Heart left ventricle (tissue), 16 donors: ENCODE measurements at regions of chr5 and their contacts with region 1.

Region 1: GRCh38 chr5:78537821-78538220 is 110.8 kb downstream of the LHFPL2 start:
- DNase-seq: no peak
- ATAC-seq: peak; percentile 57 to 81 (median 68)
- H3K4me3 ChIP-seq: no peak overlapping the region
- H3K27ac ChIP-seq: peak overlapping the region in 1 of 12 donors; percentile 6
- H3K4me1 ChIP-seq: peaks cover 0 to 72% (median 20%) of the 10 kb centered on the region in 12 donors
- H3K27me3 ChIP-seq: no peaks in the 10 kb centered on the region
- CTCF ChIP-seq: peak in 11 of 12 donors; percentile 30 to 71 (median 62)
- POLR2A ChIP-seq: no peak

Region 2: GRCh38 chr5:78638423-78638822 is 100.6 kb after region 1 on chr5:
- intact Hi-C with region 1: loop called in 3 of 10 experiments (anchors 5 to 10 kb)
- DNase-seq: peak; percentile 65 to 87 (median 71)
- ATAC-seq: peak; percentile 82 to 93 (median 92)
- H3K4me3 ChIP-seq: peak overlapping the region in 1 of 12 donors; percentile 17
- H3K27ac ChIP-seq: peak overlapping the region in 10 of 12 donors; percentile 17 to 60 (median 40)
- H3K4me1 ChIP-seq: peaks cover 4 to 73% (median 43%) of the 10 kb centered on the region in 12 donors
- H3K27me3 ChIP-seq: no peaks in the 10 kb centered on the region
- CTCF ChIP-seq: no peak
- POLR2A ChIP-seq: no peak

Region 3: DNA sequence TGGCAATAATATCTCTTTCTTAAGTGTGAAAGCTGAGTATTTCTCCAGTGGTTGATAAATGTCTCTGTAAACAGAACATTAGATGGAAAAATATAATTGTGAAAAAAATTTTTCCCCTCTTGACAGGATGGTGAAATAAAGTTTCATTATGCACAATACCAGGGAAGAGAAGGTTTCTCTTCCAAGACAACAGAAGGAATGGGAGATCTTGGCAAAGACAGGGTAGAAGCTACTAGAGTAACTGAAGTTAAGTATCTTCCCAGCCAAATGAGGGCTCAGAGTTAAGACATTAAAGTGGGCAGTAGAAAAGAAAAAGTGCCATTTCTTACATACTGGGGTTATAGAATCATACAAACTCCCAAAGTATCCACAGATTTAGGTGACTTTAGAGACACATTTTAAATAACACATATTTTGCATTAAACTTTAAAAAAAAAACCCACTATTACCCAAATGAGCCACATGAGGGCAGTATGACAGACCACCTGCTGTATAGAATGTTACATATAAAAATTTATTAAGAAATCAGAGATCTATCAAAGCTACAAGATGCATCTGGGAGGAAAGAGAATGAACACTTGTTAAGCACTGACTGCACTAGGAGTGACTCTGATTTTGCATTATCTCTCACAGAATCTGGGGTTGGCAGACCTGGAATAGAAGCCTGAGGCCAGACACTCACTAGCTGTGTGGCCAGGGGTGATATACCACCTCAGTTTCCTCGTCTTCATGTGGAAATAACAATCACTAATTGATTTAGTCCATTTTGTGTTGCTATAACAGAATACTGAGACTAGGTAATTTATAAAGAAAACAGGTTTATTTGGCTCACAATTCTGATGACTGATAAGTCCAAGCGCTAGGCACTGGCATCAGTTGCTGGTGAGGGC is 348.8 kb after region 1 on chr5:
- intact Hi-C with region 1: loop called in 1 of 10 experiments (anchors 10 kb)
- DNase-seq: no peak
- ATAC-seq: no peak
- H3K4me3 ChIP-seq: no peak overlapping the region
- H3K27ac ChIP-seq: no peak overlapping the region
- H3K4me1 ChIP-seq: peaks cover 0 to 17% (median 3%) of the 10 kb centered on the region in 12 donors
- H3K27me3 ChIP-seq: no peaks in the 10 kb centered on the region
- CTCF ChIP-seq: peak; percentile 39 to 71 (median 51)
- POLR2A ChIP-seq: no peak

Region 4: GRCh38 chr5:78958672-78959445 is 421.0 kb after region 1 on chr5:
- intact Hi-C with region 1: loop called in 7 of 10 experiments (anchors 2 to 5 kb)
- DNase-seq: no peak
- ATAC-seq: no peak
- H3K4me3 ChIP-seq: no peak overlapping the region
- H3K27ac ChIP-seq: no peak overlapping the region
- H3K4me1 ChIP-seq: no peaks in the 10 kb centered on the region
- H3K27me3 ChIP-seq: no peaks in the 10 kb centered on the region
- CTCF ChIP-seq: no peak
- POLR2A ChIP-seq: no peak

Region 5: DNA sequence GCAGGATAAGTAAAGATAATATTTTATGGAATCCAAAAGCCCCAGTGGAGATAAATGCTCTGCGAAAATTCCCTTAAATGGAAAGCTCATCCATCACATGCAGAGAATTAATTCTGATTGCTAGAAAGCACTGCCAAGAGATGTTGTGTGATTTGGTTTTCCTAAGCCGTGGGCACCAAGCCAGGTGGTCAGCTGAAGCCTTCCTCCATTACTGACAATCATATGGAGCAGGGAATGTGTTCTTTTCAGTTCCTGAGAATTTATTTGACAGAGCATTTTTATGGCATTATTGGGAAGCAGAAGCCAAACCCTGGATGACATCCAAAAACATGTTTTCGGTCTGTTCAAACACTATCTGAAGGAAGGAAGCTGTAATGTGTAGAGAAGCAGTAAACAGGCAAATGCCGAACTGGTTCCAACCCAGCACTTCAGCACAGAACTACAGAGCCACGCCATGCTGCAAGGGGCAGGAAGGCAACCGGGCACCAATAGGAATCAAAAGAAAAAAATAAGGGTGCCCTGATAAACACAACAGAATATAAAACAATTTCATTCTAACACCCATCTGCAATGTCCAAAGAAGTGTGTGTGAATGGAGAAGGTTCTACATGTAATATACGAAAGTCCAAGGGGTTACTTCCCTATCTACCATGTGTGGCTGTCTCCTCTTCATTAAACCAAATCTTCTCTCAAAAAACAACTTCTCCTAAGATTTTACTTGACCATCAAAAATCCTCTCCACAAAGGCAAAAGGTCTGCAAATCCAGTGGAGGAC is 435.0 kb after region 1 on chr5:
- intact Hi-C with region 1: loop called in 3 of 10 experiments (anchors 5 kb)
- DNase-seq: peak in 3 of 5 donors; percentile 13 to 45 (median 33)
- ATAC-seq: peak; percentile 21 to 64 (median 58)
- H3K4me3 ChIP-seq: peak overlapping the region in 5 of 12 donors; percentile 0 to 13 (median 6)
- H3K27ac ChIP-seq: peak overlapping the region in 2 of 12 donors; percentile 19 to 44
- H3K4me1 ChIP-seq: peaks cover 0 to 30% (median 14%) of the 10 kb centered on the region in 12 donors
- H3K27me3 ChIP-seq: no peaks in the 10 kb centered on the region
- CTCF ChIP-seq: no peak
- POLR2A ChIP-seq: no peak